ENCODE measurements at regions of chr7 and their contacts with region 1.

Region 1: GRCh38 chr7:86939197-86939814 is 120.1 kb downstream of the ELAPOR2 start:
- DNase-seq: peak; percentile 81
- H3K4me3 Mint-ChIP-seq: no peak overlapping the region
- H3K27ac Mint-ChIP-seq: no peak overlapping the region
- H3K4me1 Mint-ChIP-seq: peaks cover 6% of the 10 kb centered on the region
- H3K27me3 Mint-ChIP-seq: no peaks in the 10 kb centered on the region
- CTCF ChIP-seq: peak; percentile 56

Region 2: GRCh38 chr7:86667732-86668131 is 271.6 kb before region 1 on chr7:
- CTCF ChIA-PET with region 1: no interaction called
- POLR2A ChIA-PET with region 1: no interaction called
- intact Hi-C with region 1: no loop called
- DNase-seq: peak; percentile 4
- H3K4me3 Mint-ChIP-seq: no peak overlapping the region
- H3K27ac Mint-ChIP-seq: no peak overlapping the region
- H3K4me1 Mint-ChIP-seq: no peaks in the 10 kb centered on the region
- H3K27me3 Mint-ChIP-seq: peaks cover 54% of the 10 kb centered on the region
- CTCF ChIP-seq: no peak

Region 3: GRCh38 chr7:87038993-87039716 is 99.8 kb after region 1 on chr7:
- CTCF ChIA-PET with region 1: interaction called, 3 read pairs
- POLR2A ChIA-PET with region 1: no interaction called
- intact Hi-C with region 1: loop called (anchors 1 kb)
- DNase-seq: peak; percentile 13
- H3K4me3 Mint-ChIP-seq: peak overlapping the region; percentile 81
- H3K27ac Mint-ChIP-seq: peak overlapping the region; percentile 94
- H3K4me1 Mint-ChIP-seq: peaks cover 12% of the 10 kb centered on the region
- H3K27me3 Mint-ChIP-seq: peaks cover 11% of the 10 kb centered on the region
- CTCF ChIP-seq: no peak

Region 4: DNA sequence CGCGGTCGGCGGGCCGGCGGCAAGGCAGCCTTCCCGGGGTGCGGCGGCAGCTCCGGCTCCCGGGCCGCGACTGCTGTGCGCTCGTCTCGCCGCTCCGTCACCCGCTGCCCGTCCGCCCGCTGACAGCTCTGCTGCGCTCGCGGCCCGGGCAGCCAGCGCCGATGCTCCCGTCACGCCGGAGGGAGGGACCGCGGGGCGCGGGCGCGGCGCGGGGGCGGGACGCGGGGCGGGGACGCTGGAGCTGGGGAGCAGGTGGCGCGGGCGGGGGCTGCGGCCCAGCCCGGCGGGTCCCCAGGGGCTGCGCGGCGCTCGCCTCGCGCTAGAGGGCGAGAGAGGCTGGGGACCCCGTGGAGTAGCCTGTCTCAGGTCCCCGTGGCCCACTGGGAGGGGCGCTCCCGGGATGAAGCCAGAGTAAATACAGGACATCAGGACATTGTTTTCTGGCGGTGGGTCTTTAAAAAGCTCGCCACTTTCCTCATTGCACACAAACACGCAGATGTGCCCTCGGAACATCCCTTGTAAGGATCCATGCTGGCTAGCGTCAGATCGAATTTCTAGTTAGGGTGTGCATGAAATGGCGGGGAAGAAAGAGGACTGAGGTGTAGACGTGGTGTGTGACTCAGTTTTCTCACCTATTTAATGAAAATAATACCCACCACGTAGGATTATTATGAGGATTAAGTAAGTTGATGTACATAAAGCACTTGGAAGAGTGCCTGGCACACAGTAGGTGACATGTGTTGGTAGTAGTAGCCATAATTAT is 120.4 kb after region 1 on chr7 and contains the start of gene ELAPOR2:
- CTCF ChIA-PET with region 1: no interaction called
- POLR2A ChIA-PET with region 1: no interaction called
- intact Hi-C with region 1: loop called (anchors 5 kb)
- DNase-seq: peak; percentile 41
- H3K4me3 Mint-ChIP-seq: peak within 1 kb of the TSS; percentile 69
- H3K27ac Mint-ChIP-seq: no peak within 1 kb of the TSS
- H3K4me1 Mint-ChIP-seq: peaks cover 9% of the 10 kb centered on the region
- H3K27me3 Mint-ChIP-seq: peaks cover 17% of the 10 kb centered on the region
- CTCF ChIP-seq: peak; percentile 12
- total RNA-seq, gene ELAPOR2: 16.3 and 21.3 TPM in 2 replicates